K562 (cell line): ENCODE measurements at regions of chr12 and their contacts with region 1.

Region 1: GRCh38 chr12:55926738-55927587 is 731 bp downstream of the PYM1 start:
- DNase-seq: peak; percentile 96 to 98 (median 97)
- ATAC-seq: peak; percentile 81
- H3K4me3 ChIP-seq: peak overlapping the region; percentile 69
- H3K27ac ChIP-seq: peak overlapping the region; percentile 95
- H3K4me1 ChIP-seq: peaks cover 21 to 27% of the 10 kb centered on the region in 2 experiments; a peak in 4 of 5 replicates
- H3K27me3 ChIP-seq: no peaks in the 10 kb centered on the region
- CTCF ChIP-seq: peak; percentile 68 to 77 (median 68)
- EP300 ChIP-seq: no peak; the same call in 1 of the 2 replicates
- POLR2A ChIP-seq: no peak; the same call in 1 of the 2 replicates
- RAD21 ChIP-seq: peak in 1 of 2 experiments; percentile 30; a peak in 2 of 4 replicates

Region 2: GRCh38 chr12:55829967-55830600 is 96.9 kb before region 1 on chr12:
- CTCF ChIA-PET with region 1: no interaction called
- POLR2A ChIA-PET with region 1: interaction called, 11 read pairs
- in situ Hi-C with region 1: no loop called
- intact Hi-C with region 1: no loop called
- DNase-seq: peak; percentile 53 to 82 (median 70)
- ATAC-seq: peak; percentile 52
- H3K4me3 ChIP-seq: peak overlapping the region; percentile 78
- H3K27ac ChIP-seq: peak overlapping the region; percentile 83
- H3K4me1 ChIP-seq: peaks cover 28 to 42% of the 10 kb centered on the region in 2 experiments; a peak in 4 of 5 replicates
- H3K27me3 ChIP-seq: no peaks in the 10 kb centered on the region
- CTCF ChIP-seq: peak in 1 of 3 experiments; percentile 29; a peak in 2 of 6 replicates
- EP300 ChIP-seq: no peak
- POLR2A ChIP-seq: no peak
- RAD21 ChIP-seq: no peak; a peak in 1 of 4 replicates

Region 3: GRCh38 chr12:55915482-55915859 is 11.5 kb before region 1 on chr12:
- CTCF ChIA-PET with region 1: no interaction called
- POLR2A ChIA-PET with region 1: interaction called, 26 read pairs
- in situ Hi-C with region 1: no loop called
- intact Hi-C with region 1: no loop called
- DNase-seq: peak in 1 of 4 experiments; percentile 1
- ATAC-seq: no peak
- H3K4me3 ChIP-seq: no peak overlapping the region
- H3K27ac ChIP-seq: no peak overlapping the region
- H3K4me1 ChIP-seq: peaks cover 0 to 3% of the 10 kb centered on the region in 2 experiments
- H3K27me3 ChIP-seq: no peaks in the 10 kb centered on the region
- CTCF ChIP-seq: no peak
- EP300 ChIP-seq: no peak
- POLR2A ChIP-seq: no peak
- RAD21 ChIP-seq: no peak

Region 4: GRCh38 chr12:55940065-55940732 is 13.2 kb after region 1 on chr12:
- CTCF ChIA-PET with region 1: no interaction called
- POLR2A ChIA-PET with region 1: interaction called, 18 read pairs
- in situ Hi-C with region 1: no loop called
- intact Hi-C with region 1: no loop called
- DNase-seq: peak; percentile 87 to 92 (median 89)
- ATAC-seq: peak; percentile 99
- H3K4me3 ChIP-seq: no peak overlapping the region
- H3K27ac ChIP-seq: no peak overlapping the region
- H3K4me1 ChIP-seq: peaks cover 7 to 13% of the 10 kb centered on the region in 2 experiments; a peak in 4 of 5 replicates
- H3K27me3 ChIP-seq: no peaks in the 10 kb centered on the region; a peak in 1 of 5 replicates
- CTCF ChIP-seq: peak; percentile 89 to 97 (median 94)
- EP300 ChIP-seq: no peak
- POLR2A ChIP-seq: no peak
- RAD21 ChIP-seq: peak; percentile 75 to 88

Region 5: DNA sequence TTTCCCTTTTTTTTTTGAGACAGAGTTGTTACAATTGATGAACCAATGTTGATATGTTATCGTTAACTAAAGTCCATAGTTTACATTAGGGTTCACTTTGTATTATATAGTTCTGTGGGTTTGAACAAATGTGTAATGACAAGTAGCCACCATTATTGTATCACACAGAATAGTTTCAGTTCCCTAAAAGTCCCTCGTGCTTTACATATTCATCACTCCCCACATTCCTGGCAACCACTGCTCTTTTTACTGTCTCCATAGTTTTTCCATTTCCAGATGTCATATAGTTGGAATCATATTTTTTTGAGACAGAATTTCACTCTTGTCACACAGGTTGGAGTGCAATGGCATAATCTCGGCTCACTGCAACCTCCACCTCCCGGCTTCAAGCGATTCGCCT is 848.7 kb after region 1 on chr12:
- CTCF ChIA-PET with region 1: no interaction called
- POLR2A ChIA-PET with region 1: no interaction called
- in situ Hi-C with region 1: no loop called
- intact Hi-C with region 1: no loop called
- DNase-seq: no peak
- ATAC-seq: no peak
- H3K4me3 ChIP-seq: no peak overlapping the region
- H3K27ac ChIP-seq: no peak overlapping the region
- H3K4me1 ChIP-seq: peaks cover 0 to 5% of the 10 kb centered on the region in 2 experiments; a peak in 2 of 5 replicates
- H3K27me3 ChIP-seq: no peaks in the 10 kb centered on the region
- CTCF ChIP-seq: no peak
- EP300 ChIP-seq: no peak
- POLR2A ChIP-seq: no peak
- RAD21 ChIP-seq: no peak